Ascending aorta (tissue), 2 donors: ENCODE measurements at regions of chr6 and their contacts with region 1.

Region 1: GRCh38 chr6:165850434-165851019 is 187.5 kb upstream of the PDE10A start:
- DNase-seq: no peak
- H3K4me3 ChIP-seq: no peak overlapping the region
- H3K27ac ChIP-seq: no peak overlapping the region
- H3K4me1 ChIP-seq: no peaks in the 10 kb centered on the region
- H3K27me3 ChIP-seq: no peaks in the 10 kb centered on the region
- CTCF ChIP-seq: peak; percentile 52 to 97 (median 93)

Region 2: GRCh38 chr6:165439928-165440554 is 410.5 kb before region 1 on chr6:
- intact Hi-C with region 1: loop called (anchors 5 kb)
- DNase-seq: no peak
- H3K4me3 ChIP-seq: no peak overlapping the region
- H3K27ac ChIP-seq: no peak overlapping the region
- H3K4me1 ChIP-seq: no peaks in the 10 kb centered on the region
- H3K27me3 ChIP-seq: no peaks in the 10 kb centered on the region
- CTCF ChIP-seq: peak; percentile 8 to 37 (median 24)